ENCODE measurements at regions of chr20 and their contacts with region 1.

Region 1: DNA sequence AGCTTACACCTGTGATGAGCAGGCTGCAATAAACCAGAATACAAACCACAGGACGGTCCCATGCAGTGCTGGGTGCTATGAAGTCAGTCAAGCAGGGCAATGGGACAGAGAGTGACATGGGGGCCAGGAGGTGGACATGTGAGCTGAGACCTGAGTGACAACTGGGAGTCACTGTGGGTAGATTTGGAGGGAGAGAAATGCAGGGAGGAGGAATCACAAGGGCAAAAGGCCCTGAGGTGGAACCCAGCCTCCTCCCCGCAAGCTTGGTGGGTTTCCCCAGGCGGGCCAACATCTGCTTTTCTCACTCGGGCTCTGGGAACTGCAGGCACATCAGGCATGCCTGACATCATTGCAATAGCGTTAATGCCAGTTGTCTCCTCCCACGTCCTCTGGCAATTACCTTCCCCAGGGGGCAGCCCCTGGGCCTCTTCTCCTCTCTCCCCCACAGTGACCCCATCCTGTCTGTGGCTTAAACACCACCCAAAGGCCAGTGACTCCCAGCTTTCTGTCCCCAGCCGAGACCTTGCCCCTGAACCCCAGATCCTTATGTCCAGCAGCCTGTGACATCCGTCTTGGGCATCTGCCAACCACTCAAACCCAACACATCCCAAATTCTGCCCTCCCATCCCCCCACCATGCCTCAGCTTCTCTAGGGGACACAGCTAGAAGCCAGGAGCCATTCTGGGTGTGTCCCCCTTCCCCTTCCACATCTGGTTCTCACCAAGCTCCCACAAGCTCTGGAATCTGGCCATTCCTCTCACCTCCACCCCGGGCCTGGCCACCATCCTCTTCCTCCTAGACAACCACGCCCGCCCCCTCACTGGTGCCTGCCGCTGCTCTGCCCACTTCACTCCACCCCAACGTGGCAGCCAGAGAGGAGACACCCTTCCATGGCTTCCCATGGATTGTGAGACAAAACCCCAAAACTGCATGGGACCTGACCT is 28.2 kb downstream of the PDRG1 start:
- DNase-seq: no peak
- H3K4me3 ChIP-seq: no peak overlapping the region
- H3K27ac ChIP-seq: no peak overlapping the region
- H3K4me1 ChIP-seq: no peaks in the 10 kb centered on the region
- H3K27me3 ChIP-seq: no peaks in the 10 kb centered on the region
- CTCF ChIP-seq: no peak

Region 2: GRCh38 chr20:31842471-31843157 is 81.0 kb before region 1 on chr20:
- CTCF ChIA-PET with region 1: no interaction called
- dilution Hi-C with region 1: loop called (anchors 5 kb)
- in situ Hi-C with region 1: no loop called
- intact Hi-C with region 1: no loop called
- DNase-seq: no peak
- H3K4me3 ChIP-seq: no peak overlapping the region
- H3K27ac ChIP-seq: no peak overlapping the region
- H3K4me1 ChIP-seq: peaks cover 21% of the 10 kb centered on the region
- H3K27me3 ChIP-seq: peaks cover 9% of the 10 kb centered on the region
- CTCF ChIP-seq: no peak

Region 3: GRCh38 chr20:31853481-31853880 is 70.2 kb before region 1 on chr20:
- CTCF ChIA-PET with region 1: no interaction called
- dilution Hi-C with region 1: no loop called
- in situ Hi-C with region 1: no loop called
- intact Hi-C with region 1: no loop called
- DNase-seq: no peak
- H3K4me3 ChIP-seq: no peak overlapping the region
- H3K27ac ChIP-seq: no peak overlapping the region
- H3K4me1 ChIP-seq: peaks cover 7% of the 10 kb centered on the region
- H3K27me3 ChIP-seq: peaks cover 10% of the 10 kb centered on the region
- CTCF ChIP-seq: no peak

Region 4: GRCh38 chr20:31869942-31870725 is 53.5 kb before region 1 on chr20 and contains the starts of genes DUSP15 and TTLL9:
- CTCF ChIA-PET with region 1: no interaction called
- dilution Hi-C with region 1: loop called (anchors 5 kb)
- in situ Hi-C with region 1: no loop called
- intact Hi-C with region 1: no loop called
- DNase-seq: no peak
- H3K4me3 ChIP-seq: peak within 1 kb of the TSS; percentile 40 to 47 (median 43)
- H3K27ac ChIP-seq: no peak within 1 kb of the TSS
- H3K4me1 ChIP-seq: peaks cover 9% of the 10 kb centered on the region
- H3K27me3 ChIP-seq: peaks cover 32% of the 10 kb centered on the region
- CTCF ChIP-seq: no peak
- total RNA-seq, gene DUSP15: 0.67 TPM in 1 of 2 donors, not detected in the other
- total RNA-seq, gene TTLL9: 0.17 to 0.21 TPM

Region 5: GRCh38 chr20:31990641-31991338 is 67.1 kb after region 1 on chr20:
- CTCF ChIA-PET with region 1: no interaction called
- dilution Hi-C with region 1: loop called (anchors 5 kb)
- in situ Hi-C with region 1: no loop called
- intact Hi-C with region 1: no loop called
- DNase-seq: no peak
- H3K4me3 ChIP-seq: no peak overlapping the region
- H3K27ac ChIP-seq: no peak overlapping the region
- H3K4me1 ChIP-seq: peaks cover 7% of the 10 kb centered on the region
- H3K27me3 ChIP-seq: peaks cover 9% of the 10 kb centered on the region
- CTCF ChIP-seq: no peak